Cardiac septum (tissue), 1 donor: ENCODE measurements at regions of chr17 and their contacts with region 1.

Region 1: GRCh38 chr17:48024937-48025906 is 12.4 kb downstream of the COPZ2 start:
- DNase-seq: peak; percentile 99

Region 2: GRCh38 chr17:48047741-48048383 is 22.6 kb after region 1 on chr17 and contains the start of gene NFE2L1:
- intact Hi-C with region 1: loop called (anchors 2 kb)
- DNase-seq: peak; percentile 100
- total RNA-seq, gene NFE2L1: 604 TPM

Region 3: DNA sequence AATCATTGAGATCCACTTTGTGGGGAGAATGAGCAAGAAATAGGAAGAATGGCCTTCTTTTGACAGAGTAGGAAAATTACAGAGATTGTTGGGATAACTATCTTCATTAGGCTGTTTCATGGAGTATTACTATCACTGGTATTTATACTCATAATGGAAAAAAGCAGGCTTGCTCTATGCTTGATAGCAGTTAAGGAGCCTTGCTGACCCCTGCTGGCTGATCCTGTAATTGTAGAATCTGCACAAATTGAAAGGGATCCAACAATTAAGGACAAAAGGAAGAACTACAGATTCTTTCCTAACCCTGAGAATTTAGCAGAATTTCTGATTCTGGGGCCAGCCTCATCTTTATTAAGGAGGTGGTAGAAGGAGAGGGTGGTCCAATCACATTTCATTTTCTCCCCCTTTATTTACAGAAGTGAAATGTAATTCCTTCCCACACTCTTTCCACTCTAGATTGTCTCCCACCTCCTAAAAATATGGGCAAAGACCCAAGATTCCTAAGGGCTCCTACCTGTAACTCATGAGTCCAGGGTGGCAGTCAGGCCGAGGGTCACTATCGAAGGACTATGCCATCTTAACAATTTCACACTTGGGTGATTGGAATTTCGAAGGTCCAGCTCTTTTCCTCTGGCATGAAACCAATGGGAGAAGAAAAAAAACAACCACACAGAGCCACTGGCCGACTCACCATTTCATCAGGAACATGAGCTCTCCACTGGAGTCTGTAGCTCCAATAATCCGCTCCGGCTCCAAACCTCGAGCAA is 49.3 kb after region 1 on chr17:
- intact Hi-C with region 1: loop called (anchors 1 kb)
- DNase-seq: no peak

Region 4: DNA sequence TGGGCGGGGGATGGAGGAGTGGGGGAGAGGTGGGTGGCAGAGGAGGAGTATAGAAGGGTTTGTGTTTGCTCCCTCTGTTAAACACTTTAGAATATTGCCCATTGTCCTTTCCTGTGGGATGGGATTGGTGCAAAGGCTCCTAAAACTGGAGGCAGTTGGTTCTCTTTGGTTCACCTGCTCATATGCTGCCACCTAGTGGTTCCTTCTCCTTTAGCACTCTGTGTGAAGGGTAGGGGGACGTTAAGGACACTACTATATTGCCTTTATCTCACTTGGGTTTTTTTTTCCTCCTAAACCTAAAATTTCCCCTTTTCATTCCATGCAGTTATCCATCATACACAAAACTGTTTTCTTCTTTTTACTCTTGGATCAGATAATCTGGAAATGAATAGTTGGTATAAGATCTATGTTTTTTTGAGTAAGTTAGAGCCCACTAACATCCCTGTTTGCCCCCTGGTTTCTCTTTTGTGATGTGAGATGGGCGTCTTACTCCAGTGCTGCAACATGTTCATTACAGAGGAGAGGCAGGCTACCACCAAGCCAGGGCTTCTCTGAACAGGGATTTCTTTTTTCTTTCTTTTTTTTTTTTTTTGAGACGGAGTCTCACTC is 106.1 kb after region 1 on chr17:
- intact Hi-C with region 1: loop called (anchors 1 kb)
- DNase-seq: no peak